Calu3 (cell line): ENCODE measurements at regions of chr6 and their contacts with region 1.

Region 1: GRCh38 chr6:145904868-145905267 is 59.3 kb downstream of the SHPRH start:
- DNase-seq: no peak
- H3K4me3 Mint-ChIP-seq: no peak overlapping the region
- H3K27ac Mint-ChIP-seq: no peak overlapping the region
- H3K4me1 Mint-ChIP-seq: no peaks in the 10 kb centered on the region
- H3K27me3 Mint-ChIP-seq: no peaks in the 10 kb centered on the region
- CTCF ChIP-seq: no peak

Region 2: DNA sequence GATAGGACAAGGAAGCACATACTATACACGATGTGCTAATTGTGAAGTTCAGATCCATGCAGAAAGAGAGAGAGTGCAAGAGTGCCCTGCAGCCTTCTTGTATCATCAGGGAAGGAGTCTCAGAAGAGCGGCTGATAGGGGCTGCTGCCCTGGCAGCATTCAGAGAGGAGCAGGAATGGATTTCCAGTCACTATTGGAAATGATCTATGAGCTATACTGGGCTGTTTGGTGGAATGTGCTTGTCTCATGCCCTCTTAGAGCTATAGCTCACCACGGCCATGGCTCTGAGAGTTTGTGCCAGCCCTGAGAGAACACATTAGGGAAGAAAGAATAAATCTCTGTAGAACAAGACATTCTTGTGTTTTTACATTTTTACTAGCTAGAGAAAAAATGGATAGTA is 426.1 kb after region 1 on chr6:
- CTCF ChIA-PET with region 1: no interaction called
- intact Hi-C with region 1: loop called (anchors 5 kb)
- DNase-seq: no peak
- H3K4me3 Mint-ChIP-seq: no peak overlapping the region
- H3K27ac Mint-ChIP-seq: no peak overlapping the region
- H3K4me1 Mint-ChIP-seq: no peaks in the 10 kb centered on the region
- H3K27me3 Mint-ChIP-seq: no peaks in the 10 kb centered on the region
- CTCF ChIP-seq: no peak